Endothelial cell of umbilical vein (primary cell): ENCODE measurements at regions of chr7 and their contacts with region 1.

Region 1: GRCh38 chr7:108613112-108613759 is 43.6 kb downstream of the DNAJB9 start:
- DNase-seq: peak; percentile 59
- H3K4me3 ChIP-seq: no peak overlapping the region
- H3K27ac ChIP-seq: no peak overlapping the region
- H3K4me1 ChIP-seq: no peaks in the 10 kb centered on the region
- H3K27me3 ChIP-seq: peaks cover 3 to 11% of the 10 kb centered on the region in 2 experiments
- CTCF ChIP-seq: peak; percentile 30 to 35
- POLR2A ChIP-seq: no peak

Region 2: DNA sequence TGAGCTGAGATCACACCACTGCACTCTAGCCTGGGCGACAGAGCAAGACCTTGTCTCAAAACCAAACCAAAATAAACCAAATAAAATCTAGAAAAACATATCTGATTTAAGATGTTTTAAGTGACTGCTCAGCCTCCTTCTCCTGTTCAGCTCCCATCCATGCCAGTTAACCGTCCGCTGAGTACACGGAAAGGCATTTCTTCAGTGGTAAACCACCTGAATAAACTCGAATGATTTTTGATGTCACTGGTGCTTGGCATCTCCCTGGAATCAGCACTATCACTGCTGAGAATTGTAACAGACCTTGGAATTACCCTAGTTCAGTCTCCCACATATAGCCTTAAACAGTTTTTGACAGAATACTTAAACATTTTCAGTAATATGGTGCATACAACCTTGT is 132.9 kb before region 1 on chr7:
- CTCF ChIA-PET with region 1: no interaction called
- POLR2A ChIA-PET with region 1: no interaction called
- dilution Hi-C with region 1: no loop called
- intact Hi-C with region 1: no loop called
- DNase-seq: no peak
- H3K4me3 ChIP-seq: no peak overlapping the region
- H3K27ac ChIP-seq: no peak overlapping the region
- H3K4me1 ChIP-seq: no peaks in the 10 kb centered on the region
- H3K27me3 ChIP-seq: no peaks in the 10 kb centered on the region
- CTCF ChIP-seq: no peak
- POLR2A ChIP-seq: no peak

Region 3: GRCh38 chr7:108589874-108590273 is 23.4 kb before region 1 on chr7:
- CTCF ChIA-PET with region 1: no interaction called
- POLR2A ChIA-PET with region 1: no interaction called
- dilution Hi-C with region 1: no loop called
- intact Hi-C with region 1: no loop called
- DNase-seq: no peak
- H3K4me3 ChIP-seq: no peak overlapping the region
- H3K27ac ChIP-seq: no peak overlapping the region
- H3K4me1 ChIP-seq: no peaks in the 10 kb centered on the region
- H3K27me3 ChIP-seq: peaks cover 27 to 29% of the 10 kb centered on the region in 2 experiments
- CTCF ChIP-seq: no peak
- POLR2A ChIP-seq: no peak

Region 4: GRCh38 chr7:109529712-109530111 is 916.5 kb after region 1 on chr7:
- CTCF ChIA-PET with region 1: no interaction called
- POLR2A ChIA-PET with region 1: no interaction called
- dilution Hi-C with region 1: no loop called
- intact Hi-C with region 1: no loop called
- DNase-seq: no peak
- H3K4me3 ChIP-seq: no peak overlapping the region
- H3K27ac ChIP-seq: no peak overlapping the region
- H3K4me1 ChIP-seq: no peaks in the 10 kb centered on the region
- H3K27me3 ChIP-seq: no peaks in the 10 kb centered on the region
- CTCF ChIP-seq: no peak
- POLR2A ChIP-seq: no peak

Region 5: GRCh38 chr7:110090110-110090769 is 1477.0 kb after region 1 on chr7:
- CTCF ChIA-PET with region 1: no interaction called
- POLR2A ChIA-PET with region 1: no interaction called
- dilution Hi-C with region 1: no loop called
- intact Hi-C with region 1: loop called (anchors 5 kb)
- DNase-seq: peak; percentile 48
- H3K4me3 ChIP-seq: no peak overlapping the region
- H3K27ac ChIP-seq: no peak overlapping the region
- H3K4me1 ChIP-seq: no peaks in the 10 kb centered on the region
- H3K27me3 ChIP-seq: no peaks in the 10 kb centered on the region
- CTCF ChIP-seq: peak; percentile 40 to 58
- POLR2A ChIP-seq: no peak